ENCODE measurements at regions of chr1 and their contacts with region 1.

Region 1: GRCh38 chr1:167454894-167455785 is 63.2 kb downstream of the CD247 start:
- DNase-seq: no peak
- ATAC-seq: peak; percentile 83
- H3K4me3 ChIP-seq: peak overlapping the region; percentile 56
- H3K27ac ChIP-seq: no peak overlapping the region
- H3K4me1 ChIP-seq: no peaks in the 10 kb centered on the region
- H3K27me3 ChIP-seq: peaks cover 25% of the 10 kb centered on the region
- CTCF ChIP-seq: no peak
- POLR2A ChIP-seq: no peak
- RAD21 ChIP-seq: no peak

Region 2: GRCh38 chr1:166865931-166866330 is 589.2 kb before region 1 on chr1:
- CTCF ChIA-PET with region 1: no interaction called
- POLR2A ChIA-PET with region 1: no interaction called
- dilution Hi-C with region 1: no loop called
- in situ Hi-C with region 1: no loop called
- intact Hi-C with region 1: no loop called
- DNase-seq: peak; percentile 39
- ATAC-seq: no peak
- H3K4me3 ChIP-seq: no peak overlapping the region
- H3K27ac ChIP-seq: no peak overlapping the region
- H3K4me1 ChIP-seq: no peaks in the 10 kb centered on the region
- H3K27me3 ChIP-seq: no peaks in the 10 kb centered on the region
- CTCF ChIP-seq: no peak
- POLR2A ChIP-seq: no peak
- RAD21 ChIP-seq: no peak

Region 3: GRCh38 chr1:167471568-167471967 is 16.4 kb after region 1 on chr1:
- CTCF ChIA-PET with region 1: interaction called, 3 read pairs
- POLR2A ChIA-PET with region 1: interaction called, 13 read pairs
- dilution Hi-C with region 1: no loop called
- in situ Hi-C with region 1: no loop called
- intact Hi-C with region 1: no loop called
- DNase-seq: no peak
- ATAC-seq: no peak
- H3K4me3 ChIP-seq: no peak overlapping the region
- H3K27ac ChIP-seq: no peak overlapping the region
- H3K4me1 ChIP-seq: no peaks in the 10 kb centered on the region; the same call in 1 of the 2 replicates
- H3K27me3 ChIP-seq: peaks cover 13% of the 10 kb centered on the region
- CTCF ChIP-seq: no peak
- POLR2A ChIP-seq: no peak
- RAD21 ChIP-seq: no peak

Region 4: GRCh38 chr1:168136709-168137514 is 681.8 kb after region 1 on chr1 and contains the start of gene GPR161:
- CTCF ChIA-PET with region 1: no interaction called
- POLR2A ChIA-PET with region 1: no interaction called
- dilution Hi-C with region 1: no loop called
- in situ Hi-C with region 1: no loop called
- intact Hi-C with region 1: no loop called
- DNase-seq: peak; percentile 36
- ATAC-seq: peak; percentile 72
- H3K4me3 ChIP-seq: peak within 1 kb of the TSS; percentile 70
- H3K27ac ChIP-seq: peak within 1 kb of the TSS; percentile 76
- H3K4me1 ChIP-seq: peaks cover 3% of the 10 kb centered on the region; the same call in 1 of the 2 replicates
- H3K27me3 ChIP-seq: 0 out of 2 replicates have a peak, but pooled peaks cover 2% of the 10 kb centered on the region
- CTCF ChIP-seq: no peak
- POLR2A ChIP-seq: no peak
- RAD21 ChIP-seq: no peak
- total RNA-seq, gene GPR161: 11.1 and 13.3 TPM in 2 replicates